A549 (cell line): ENCODE measurements at regions of chr6 and their contacts with region 1.

Region 1: DNA sequence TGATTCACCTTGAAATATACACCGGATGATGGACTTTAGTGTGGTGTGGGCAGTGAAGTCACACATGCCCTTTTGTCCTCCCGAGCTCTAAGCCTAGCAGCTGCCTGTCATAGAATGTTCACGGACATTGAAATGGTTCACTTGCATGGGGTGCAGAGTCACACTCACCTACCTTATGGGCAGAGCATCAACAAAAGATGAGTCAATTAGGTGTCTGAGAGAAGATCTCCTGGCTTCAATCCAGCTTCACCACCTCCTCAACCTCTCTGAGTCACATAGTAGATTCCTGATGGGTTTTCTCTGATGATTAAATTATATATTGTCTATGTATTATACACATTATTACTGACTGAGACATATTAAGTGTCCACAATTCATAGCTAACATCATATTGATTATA is 48.1 kb upstream of the HLA-E start:
- DNase-seq: no peak
- ATAC-seq: no peak
- H3K4me3 ChIP-seq: no peak overlapping the region
- H3K27ac ChIP-seq: no peak overlapping the region
- H3K4me1 ChIP-seq: 0 out of 3 replicates have a peak, but pooled peaks cover 4% of the 10 kb centered on the region
- CTCF ChIP-seq: no peak
- EP300 ChIP-seq: no peak
- POLR2A ChIP-seq: no peak
- RAD21 ChIP-seq: no peak

Region 2: DNA sequence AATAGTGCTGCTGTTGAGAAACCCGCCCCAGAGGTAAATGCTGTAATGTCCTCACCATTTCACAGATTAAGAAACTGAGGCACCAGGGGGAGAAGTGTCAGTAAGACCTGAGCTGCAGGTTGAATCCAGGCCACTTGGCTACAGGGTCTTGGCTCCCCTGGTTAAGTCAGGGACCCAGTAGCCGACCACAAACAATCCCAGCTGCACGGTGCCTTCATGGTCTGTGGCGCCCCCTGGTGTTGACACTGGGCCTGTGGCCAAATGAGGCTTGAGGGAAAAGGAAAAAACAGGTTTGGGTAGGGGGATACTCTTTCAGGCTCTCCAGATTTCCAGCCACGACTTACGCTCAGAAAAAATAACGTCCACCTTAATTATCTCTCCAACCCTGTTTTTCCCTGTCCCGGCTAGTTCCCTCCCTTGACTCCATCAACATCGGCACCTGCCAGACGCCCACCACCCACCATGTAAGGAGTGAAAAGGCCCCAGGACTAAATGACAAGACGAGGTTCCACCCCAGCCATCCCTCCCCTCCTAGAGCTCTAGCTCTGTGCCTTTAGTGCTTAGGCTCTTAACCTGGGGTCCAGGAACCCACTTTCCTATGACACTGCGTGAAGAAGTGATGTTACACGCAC is 427.8 kb before region 1 on chr6:
- CTCF ChIA-PET with region 1: no interaction called
- POLR2A ChIA-PET with region 1: no interaction called
- DNase-seq: peak in 1 of 2 experiments; percentile 3
- ATAC-seq: peak in 1 of 2 experiments; percentile 69; a peak in 3 of 6 replicates
- H3K4me3 ChIP-seq: no peak overlapping the region
- H3K27ac ChIP-seq: no peak overlapping the region
- H3K4me1 ChIP-seq: no peaks in the 10 kb centered on the region
- CTCF ChIP-seq: peak; percentile 52
- EP300 ChIP-seq: no peak
- POLR2A ChIP-seq: no peak
- RAD21 ChIP-seq: peak; percentile 59 to 73

Region 3: GRCh38 chr6:30453508-30454116 is 12.4 kb after region 1 on chr6:
- CTCF ChIA-PET with region 1: interaction called, 12 read pairs
- POLR2A ChIA-PET with region 1: no interaction called
- DNase-seq: peak; percentile 81 to 89
- ATAC-seq: peak; percentile 82 to 97
- H3K4me3 ChIP-seq: no peak overlapping the region
- H3K27ac ChIP-seq: no peak overlapping the region
- H3K4me1 ChIP-seq: no peaks in the 10 kb centered on the region
- CTCF ChIP-seq: peak; percentile 61
- EP300 ChIP-seq: no peak
- POLR2A ChIP-seq: no peak
- RAD21 ChIP-seq: peak; percentile 52 to 60

Region 4: GRCh38 chr6:30556906-30557682 is 115.9 kb after region 1 on chr6 and contains the start of gene PRR3:
- CTCF ChIA-PET with region 1: no interaction called
- POLR2A ChIA-PET with region 1: no interaction called
- DNase-seq: peak; percentile 67 to 93
- ATAC-seq: peak; percentile 83 to 85
- H3K4me3 ChIP-seq: peak within 1 kb of the TSS; percentile 88
- H3K27ac ChIP-seq: peak within 1 kb of the TSS; percentile 91 to 94
- H3K4me1 ChIP-seq: peaks cover 13% of the 10 kb centered on the region; the same call in 2 of the 3 replicates
- CTCF ChIP-seq: no peak
- EP300 ChIP-seq: no peak
- POLR2A ChIP-seq: peak; percentile 49
- RAD21 ChIP-seq: no peak
- polyA plus RNA-seq, gene PRR3: 24.1 and 29.5 TPM in 2 replicates